Aorta (tissue), 5 donors: ENCODE measurements at regions of chr4 and their contacts with region 1.

Region 1: DNA sequence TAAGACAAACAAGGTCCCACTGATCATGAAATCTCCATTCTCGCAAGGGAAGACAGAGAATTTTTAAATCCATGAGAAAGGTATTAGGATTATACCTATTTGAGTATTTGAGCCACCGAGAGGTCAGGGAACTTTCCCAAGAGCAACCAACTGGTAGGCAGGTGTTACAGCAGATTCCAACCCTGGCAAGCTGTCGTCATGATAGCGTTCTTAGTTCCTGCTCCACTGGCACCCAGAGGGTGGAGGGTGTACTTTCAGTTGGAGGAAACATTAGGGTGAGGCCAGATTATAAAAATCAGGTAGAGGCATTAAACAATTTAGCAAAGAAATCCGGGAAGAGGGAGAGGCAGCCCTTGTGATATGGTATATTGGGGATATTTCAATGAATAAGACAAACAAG is 23.3 kb downstream of the COQ2 start:
- DNase-seq: no peak
- ATAC-seq: no peak
- H3K4me3 ChIP-seq: no peak overlapping the region
- H3K27ac ChIP-seq: no peak overlapping the region
- H3K4me1 ChIP-seq: no peaks in the 10 kb centered on the region
- H3K27me3 ChIP-seq: no peaks in the 10 kb centered on the region

Region 2: DNA sequence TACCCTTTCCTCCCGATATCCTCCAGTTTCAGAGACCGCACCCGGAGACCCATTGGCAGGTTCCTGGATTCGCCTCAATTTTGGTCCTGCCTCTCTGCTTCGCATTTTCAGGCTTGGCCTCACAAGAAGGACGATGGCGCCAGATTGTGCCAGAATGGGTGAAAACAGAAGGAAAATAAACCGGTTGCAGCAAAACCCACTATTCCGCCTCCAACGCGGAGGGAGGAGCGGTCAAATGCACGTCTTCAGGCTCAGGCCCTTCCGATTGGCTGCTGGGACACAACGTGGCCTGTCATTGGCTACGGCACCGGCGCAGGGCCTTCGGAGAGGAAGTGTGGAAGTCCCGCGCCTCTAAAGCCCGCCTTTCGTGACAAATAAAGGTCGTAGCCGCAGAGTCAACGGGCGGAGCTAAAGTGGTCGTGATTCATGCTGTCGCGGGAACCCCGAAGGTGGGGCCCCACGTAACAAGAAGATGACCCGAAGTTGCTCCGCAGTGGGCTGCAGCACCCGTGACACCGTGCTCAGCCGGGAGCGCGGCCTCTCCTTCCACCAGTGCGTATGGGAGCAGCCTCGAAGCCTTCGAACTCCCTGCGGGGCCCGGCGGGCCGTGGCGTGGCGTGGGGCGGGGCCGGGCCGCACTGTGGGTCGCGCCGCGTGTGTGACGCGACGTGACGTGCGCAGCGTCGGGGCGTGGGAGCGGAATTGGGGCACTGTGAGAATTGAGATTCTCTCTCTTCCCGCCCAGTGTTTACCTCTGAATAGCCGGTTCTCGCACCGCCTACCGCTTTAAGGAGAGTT is 360.8 kb before region 1 on chr4 and contains the start of gene THAP9:
- intact Hi-C with region 1: loop called in 1 of 2 experiments (anchors 2 kb)
- DNase-seq: peak; percentile 99
- ATAC-seq: peak; percentile 99
- H3K4me3 ChIP-seq: peak within 1 kb of the TSS; percentile 90 to 91
- H3K27ac ChIP-seq: peak within 1 kb of the TSS; percentile 85 to 96
- H3K4me1 ChIP-seq: peaks cover 0 to 2% of the 10 kb centered on the region in 2 donors
- H3K27me3 ChIP-seq: no peaks in the 10 kb centered on the region
- total RNA-seq, gene THAP9: 2.6 to 6.5 TPM

Region 3: GRCh38 chr4:83074086-83074704 is 187.1 kb before region 1 on chr4:
- intact Hi-C with region 1: loop called (anchors 5 kb)
- DNase-seq: no peak
- ATAC-seq: no peak
- H3K4me3 ChIP-seq: no peak overlapping the region
- H3K27ac ChIP-seq: no peak overlapping the region
- H3K4me1 ChIP-seq: no peaks in the 10 kb centered on the region
- H3K27me3 ChIP-seq: no peaks in the 10 kb centered on the region

Region 4: DNA sequence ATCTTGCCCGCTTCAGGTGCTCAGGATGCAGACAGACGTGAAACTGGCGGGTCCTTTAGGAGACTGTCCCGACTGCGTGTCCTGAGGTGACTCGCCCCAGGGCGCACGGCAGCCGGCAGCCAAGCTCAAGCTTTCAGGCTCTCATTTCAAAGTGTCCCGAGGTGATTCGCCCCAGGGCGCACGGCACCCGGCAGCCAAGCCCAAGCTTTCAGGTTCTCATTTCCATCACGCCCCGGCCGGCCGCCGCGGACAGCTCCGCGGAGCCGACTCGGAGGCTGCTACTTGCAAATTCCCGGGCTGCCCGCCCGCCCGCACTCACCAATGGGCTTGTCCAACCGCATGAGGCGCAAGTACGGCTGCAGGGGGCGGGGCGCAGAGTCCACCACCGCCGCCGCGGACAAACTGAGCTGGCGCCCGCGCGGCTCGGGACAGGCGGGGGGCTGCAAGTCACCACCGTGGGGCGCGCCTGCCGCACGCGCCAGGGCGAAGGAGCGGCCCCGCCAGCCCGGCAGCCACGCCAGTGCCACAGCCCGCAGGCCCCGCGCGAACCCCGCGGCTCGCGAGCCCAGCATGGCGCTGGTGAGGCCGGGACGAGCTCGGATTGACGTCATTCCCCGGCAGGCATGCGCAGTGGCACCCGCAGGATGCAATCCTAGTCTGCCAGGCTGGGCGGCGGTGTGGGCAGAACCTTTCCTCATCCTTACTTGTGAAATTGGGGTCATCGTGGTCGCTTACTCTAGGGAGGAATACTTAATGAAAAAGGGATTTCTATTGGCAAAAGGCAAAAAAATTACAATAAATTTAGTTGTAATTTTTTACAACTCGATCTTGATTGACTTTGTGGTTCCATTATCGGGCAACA is 23.1 kb after region 1 on chr4 and contains the start of gene COQ2:
- intact Hi-C with region 1: no loop called
- DNase-seq: peak; percentile 97 to 99
- ATAC-seq: peak; percentile 97
- H3K4me3 ChIP-seq: peak within 1 kb of the TSS; percentile 50 to 70
- H3K27ac ChIP-seq: peak within 1 kb of the TSS; percentile 32 to 72
- H3K4me1 ChIP-seq: peaks cover 0 to 2% of the 10 kb centered on the region in 2 donors
- H3K27me3 ChIP-seq: no peaks in the 10 kb centered on the region
- total RNA-seq, gene COQ2: 6.6 to 7.6 TPM